Adrenal gland (tissue), 19 donors: ENCODE measurements at regions of chr14 and their contacts with region 1.

Region 1: GRCh38 chr14:20400965-20401593 is 12.2 kb downstream of the TEP1 start:
- DNase-seq: no peak
- H3K4me3 ChIP-seq: no peak overlapping the region
- H3K27ac ChIP-seq: no peak overlapping the region
- H3K4me1 ChIP-seq: no peaks in the 10 kb centered on the region
- H3K27me3 ChIP-seq: no peaks in the 10 kb centered on the region
- CTCF ChIP-seq: no peak
- POLR2A ChIP-seq: no peak

Region 2: GRCh38 chr14:20350860-20351259 is 50.2 kb before region 1 on chr14:
- intact Hi-C with region 1: loop called in 1 of 2 experiments (anchors 10 kb)
- DNase-seq: peak in 1 of 7 donors; percentile 19
- H3K4me3 ChIP-seq: no peak overlapping the region
- H3K27ac ChIP-seq: no peak overlapping the region
- H3K4me1 ChIP-seq: peaks cover 6 to 10% of the 10 kb centered on the region in 2 donors
- H3K27me3 ChIP-seq: no peaks in the 10 kb centered on the region
- CTCF ChIP-seq: peak in 5 of 6 experiments; percentile 13 to 29 (median 22)
- POLR2A ChIP-seq: no peak

Region 3: GRCh38 chr14:20489093-20489994 is 88.3 kb after region 1 on chr14:
- intact Hi-C with region 1: no loop called
- DNase-seq: no peak
- H3K4me3 ChIP-seq: no peak overlapping the region
- H3K27ac ChIP-seq: no peak overlapping the region
- H3K4me1 ChIP-seq: no peaks in the 10 kb centered on the region
- H3K27me3 ChIP-seq: no peaks in the 10 kb centered on the region
- CTCF ChIP-seq: no peak
- POLR2A ChIP-seq: no peak

Region 4: DNA sequence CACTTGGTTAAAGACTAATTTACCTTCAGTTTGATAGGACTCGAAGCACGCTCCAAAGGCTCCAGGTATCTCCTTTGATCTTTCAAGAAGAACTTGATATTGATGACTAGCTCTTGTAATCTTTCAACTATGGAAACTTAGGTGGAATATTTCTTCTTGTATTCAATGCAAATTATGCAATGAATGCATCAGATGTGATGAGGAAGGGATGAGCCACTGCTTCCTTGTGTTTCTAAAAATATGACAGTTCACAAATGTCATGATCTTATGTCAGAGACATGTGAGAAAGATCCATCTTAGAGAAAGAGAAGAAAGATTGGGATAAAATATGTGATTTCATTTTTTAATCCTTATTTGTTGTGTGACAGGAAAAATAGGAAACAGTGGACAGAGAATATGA is 149.8 kb after region 1 on chr14:
- intact Hi-C with region 1: no loop called
- DNase-seq: no peak
- H3K4me3 ChIP-seq: no peak overlapping the region
- H3K27ac ChIP-seq: no peak overlapping the region
- H3K4me1 ChIP-seq: no peaks in the 10 kb centered on the region
- H3K27me3 ChIP-seq: no peaks in the 10 kb centered on the region
- CTCF ChIP-seq: no peak
- POLR2A ChIP-seq: no peak